ENCODE measurements at regions of chr17 and their contacts with region 1.

Region 1: GRCh38 chr17:38613981-38614813 is 8.4 kb upstream of the SRCIN1 start:
- DNase-seq: no peak
- ATAC-seq: no peak
- H3K4me3 ChIP-seq: no peak overlapping the region
- H3K27ac ChIP-seq: no peak overlapping the region
- H3K4me1 ChIP-seq: no peaks in the 10 kb centered on the region
- H3K27me3 ChIP-seq: peaks cover 67% of the 10 kb centered on the region
- CTCF ChIP-seq: no peak
- POLR2A ChIP-seq: no peak
- RAD21 ChIP-seq: no peak

Region 2: GRCh38 chr17:38428112-38428642 is 186.0 kb before region 1 on chr17 and contains the start of gene ARHGAP23:
- CTCF ChIA-PET with region 1: no interaction called
- POLR2A ChIA-PET with region 1: interaction called, 11 read pairs
- dilution Hi-C with region 1: no loop called
- in situ Hi-C with region 1: no loop called
- intact Hi-C with region 1: no loop called
- DNase-seq: peak; percentile 72
- ATAC-seq: peak; percentile 69
- H3K4me3 ChIP-seq: peak within 1 kb of the TSS; percentile 96
- H3K27ac ChIP-seq: peak within 1 kb of the TSS; percentile 96
- H3K4me1 ChIP-seq: peaks cover 38% of the 10 kb centered on the region
- H3K27me3 ChIP-seq: no peaks in the 10 kb centered on the region
- CTCF ChIP-seq: no peak
- POLR2A ChIP-seq: 0 out of 2 replicates have a peak, but pooled peaks have one; percentile 24
- RAD21 ChIP-seq: no peak
- total RNA-seq, gene ARHGAP23: 9.3 and 17.8 TPM in 2 replicates

Region 3: DNA sequence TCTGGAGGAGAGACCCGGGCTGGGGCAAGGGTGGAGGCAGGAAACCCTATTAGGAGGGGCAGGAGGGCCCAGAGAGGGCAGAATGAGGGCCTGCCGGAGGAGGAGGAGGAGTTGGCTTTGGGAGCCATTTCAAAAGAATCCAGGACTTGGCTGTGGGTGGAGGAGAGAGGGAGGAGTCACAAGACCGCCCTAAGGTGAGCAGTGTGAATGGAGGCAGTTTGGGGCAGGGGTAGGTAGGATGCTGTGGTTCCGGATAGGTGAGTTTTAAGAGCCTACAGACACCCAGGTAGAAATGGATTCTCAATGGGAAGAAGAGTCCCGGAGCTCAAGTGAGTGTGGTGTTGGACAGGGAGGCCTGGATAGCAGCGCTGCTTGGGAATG is 105.6 kb before region 1 on chr17:
- CTCF ChIA-PET with region 1: no interaction called
- POLR2A ChIA-PET with region 1: no interaction called
- dilution Hi-C with region 1: no loop called
- in situ Hi-C with region 1: no loop called
- intact Hi-C with region 1: no loop called
- DNase-seq: no peak
- ATAC-seq: no peak
- H3K4me3 ChIP-seq: no peak overlapping the region
- H3K27ac ChIP-seq: no peak overlapping the region
- H3K4me1 ChIP-seq: peaks cover 12% of the 10 kb centered on the region
- H3K27me3 ChIP-seq: no peaks in the 10 kb centered on the region
- CTCF ChIP-seq: no peak
- POLR2A ChIP-seq: no peak
- RAD21 ChIP-seq: no peak

Region 4: DNA sequence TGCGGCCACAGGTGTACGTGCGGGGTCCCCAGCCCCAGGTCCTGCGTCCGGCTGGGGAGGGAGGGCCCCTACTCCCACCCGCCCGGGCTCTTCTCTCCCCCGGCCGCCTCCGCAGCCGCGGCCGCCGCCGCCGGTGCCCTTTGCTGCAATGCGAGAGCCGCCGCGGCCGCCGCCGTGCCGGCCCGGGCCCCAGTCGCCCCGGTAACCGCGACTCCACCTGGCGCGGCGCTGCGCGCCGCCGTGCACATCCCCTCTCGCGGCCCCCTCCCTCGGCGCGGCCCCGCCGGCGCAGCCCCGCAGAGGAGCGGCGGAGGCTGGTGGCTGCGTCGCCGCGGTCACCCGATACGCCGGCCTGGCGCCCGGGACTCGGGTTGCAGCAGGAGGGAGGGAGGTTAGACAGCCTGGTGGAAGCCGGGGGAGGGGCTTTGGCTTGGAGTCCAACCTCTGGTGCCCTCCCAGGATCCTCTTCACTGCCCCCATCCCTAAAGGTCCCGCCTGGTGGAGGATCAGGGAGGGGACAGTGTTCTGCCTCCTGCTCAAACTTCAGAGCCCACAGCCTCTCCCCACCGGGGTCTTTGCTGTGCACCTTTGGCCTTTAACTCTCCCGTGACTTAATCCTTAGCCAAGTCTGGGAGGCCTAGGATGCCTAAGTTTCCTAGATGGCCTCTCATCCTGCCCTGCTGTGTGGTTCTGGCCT is 41.4 kb before region 1 on chr17:
- CTCF ChIA-PET with region 1: no interaction called
- POLR2A ChIA-PET with region 1: no interaction called
- dilution Hi-C with region 1: no loop called
- in situ Hi-C with region 1: no loop called
- intact Hi-C with region 1: no loop called
- DNase-seq: no peak
- ATAC-seq: peak; percentile 64
- H3K4me3 ChIP-seq: no peak overlapping the region
- H3K27ac ChIP-seq: no peak overlapping the region
- H3K4me1 ChIP-seq: no peaks in the 10 kb centered on the region
- H3K27me3 ChIP-seq: peaks cover 100% of the 10 kb centered on the region
- CTCF ChIP-seq: no peak
- POLR2A ChIP-seq: no peak
- RAD21 ChIP-seq: no peak

Region 5: GRCh38 chr17:38685491-38685890 is 71.3 kb after region 1 on chr17:
- CTCF ChIA-PET with region 1: no interaction called
- POLR2A ChIA-PET with region 1: no interaction called
- dilution Hi-C with region 1: no loop called
- in situ Hi-C with region 1: no loop called
- intact Hi-C with region 1: no loop called
- DNase-seq: no peak
- ATAC-seq: no peak
- H3K4me3 ChIP-seq: no peak overlapping the region
- H3K27ac ChIP-seq: no peak overlapping the region
- H3K4me1 ChIP-seq: no peaks in the 10 kb centered on the region
- H3K27me3 ChIP-seq: peaks cover 7% of the 10 kb centered on the region
- CTCF ChIP-seq: no peak
- POLR2A ChIP-seq: no peak
- RAD21 ChIP-seq: no peak